ENCODE measurements at regions of chr18 and their contacts with region 1.

Region 1: DNA sequence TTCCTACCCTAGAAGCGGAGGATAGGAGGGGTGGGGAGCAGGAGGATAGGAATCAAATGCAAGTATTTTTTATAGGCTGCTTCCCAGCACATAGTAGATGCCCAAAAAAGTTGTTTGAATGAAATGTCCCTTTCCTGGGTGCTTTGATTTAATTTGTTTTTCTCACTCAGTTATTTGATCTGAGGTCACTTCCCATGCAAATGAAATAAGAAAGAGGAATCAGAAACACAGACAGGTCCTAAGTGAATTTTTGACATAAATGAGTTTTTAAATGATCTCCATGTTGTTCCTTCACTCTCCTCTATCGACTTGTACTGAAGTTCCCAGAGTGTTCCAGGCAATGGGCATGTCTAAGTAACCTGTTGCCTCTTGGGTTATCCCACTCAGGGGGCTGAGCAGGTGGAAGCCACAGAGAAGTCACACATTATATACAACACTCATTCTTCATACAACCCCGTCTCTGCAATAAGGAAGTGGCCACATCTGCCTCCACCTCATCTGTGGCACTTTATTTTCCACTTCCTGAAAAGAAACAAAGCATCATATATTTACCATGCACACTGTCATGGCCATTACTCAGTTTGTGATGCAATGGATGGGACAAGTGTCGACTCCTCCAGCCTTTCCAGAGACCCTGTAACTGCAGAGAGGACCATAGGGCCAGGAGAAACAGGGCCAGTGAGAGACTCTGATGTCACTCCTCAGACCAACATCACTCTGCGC is 81.9 kb upstream of the ZNF397 start:
- DNase-seq: peak; percentile 17
- H3K4me3 Mint-ChIP-seq: no peak overlapping the region
- H3K27ac Mint-ChIP-seq: peak overlapping the region; percentile 89
- H3K4me1 Mint-ChIP-seq: peaks cover 20% of the 10 kb centered on the region
- H3K27me3 Mint-ChIP-seq: no peaks in the 10 kb centered on the region

Region 2: GRCh38 chr18:34867520-34867919 is 291.4 kb before region 1 on chr18:
- intact Hi-C with region 1: loop called (anchors 5 kb)
- DNase-seq: no peak
- H3K4me3 Mint-ChIP-seq: no peak overlapping the region
- H3K27ac Mint-ChIP-seq: no peak overlapping the region
- H3K4me1 Mint-ChIP-seq: peaks cover 34% of the 10 kb centered on the region
- H3K27me3 Mint-ChIP-seq: peaks cover 12% of the 10 kb centered on the region

Measured in activated T-helper 2 cell treated with anti-CD3 and anti-CD28 coated beads, Interferon-gamma antibody, Interleukin-2, Interleukin-4, amounts not matched to agents 10 μg/mL and 5 μg/mL and 100 μg/mL, durations not matched to agents 14 hours and 24 hours and 36 hours (primary cell).